ENCODE measurements at regions of chr7 and their contacts with region 1.

Region 1: GRCh38 chr7:7795203-7796135 is 77.1 kb upstream of the RPA3 start:
- DNase-seq: no peak
- H3K4me3 ChIP-seq: no peak overlapping the region
- H3K27ac ChIP-seq: no peak overlapping the region
- H3K4me1 ChIP-seq: no peaks in the 10 kb centered on the region
- H3K27me3 ChIP-seq: no peaks in the 10 kb centered on the region
- CTCF ChIP-seq: no peak
- EP300 ChIP-seq: no peak
- POLR2A ChIP-seq: no peak

Region 2: GRCh38 chr7:7681179-7681935 is 114.1 kb before region 1 on chr7:
- intact Hi-C with region 1: no loop called
- DNase-seq: peak in 1 of 5 donors; percentile 58
- H3K4me3 ChIP-seq: no peak overlapping the region
- H3K27ac ChIP-seq: peak overlapping the region in 1 of 2 donors; percentile 46
- H3K4me1 ChIP-seq: no peaks in the 10 kb centered on the region
- H3K27me3 ChIP-seq: no peaks in the 10 kb centered on the region
- CTCF ChIP-seq: peak; percentile 31 to 52 (median 47)
- EP300 ChIP-seq: no peak
- POLR2A ChIP-seq: no peak

Region 3: DNA sequence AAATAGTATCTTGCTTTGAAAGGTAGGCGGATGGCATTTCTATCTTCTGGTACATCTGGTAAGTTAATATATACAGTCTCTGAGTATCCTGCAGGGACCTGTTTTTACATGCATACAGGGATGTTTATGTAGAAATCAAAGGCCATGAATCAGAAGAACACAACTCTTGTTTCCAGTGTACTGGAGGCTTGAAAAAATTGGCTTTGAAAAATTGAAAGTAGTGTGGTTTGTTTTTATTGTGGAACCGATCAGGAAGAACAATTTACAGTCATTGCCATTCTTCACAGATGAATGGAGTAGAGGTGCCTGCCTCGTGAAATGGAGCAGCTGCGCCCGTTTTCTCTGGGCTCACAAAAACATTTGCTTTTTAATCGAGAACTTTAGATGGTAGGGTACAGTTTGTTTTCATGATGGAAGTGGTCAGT is 23.1 kb before region 1 on chr7:
- intact Hi-C with region 1: no loop called
- DNase-seq: no peak
- H3K4me3 ChIP-seq: no peak overlapping the region
- H3K27ac ChIP-seq: no peak overlapping the region
- H3K4me1 ChIP-seq: peaks cover 3% of the 10 kb centered on the region
- H3K27me3 ChIP-seq: no peaks in the 10 kb centered on the region
- CTCF ChIP-seq: no peak
- EP300 ChIP-seq: no peak
- POLR2A ChIP-seq: no peak

Region 4: DNA sequence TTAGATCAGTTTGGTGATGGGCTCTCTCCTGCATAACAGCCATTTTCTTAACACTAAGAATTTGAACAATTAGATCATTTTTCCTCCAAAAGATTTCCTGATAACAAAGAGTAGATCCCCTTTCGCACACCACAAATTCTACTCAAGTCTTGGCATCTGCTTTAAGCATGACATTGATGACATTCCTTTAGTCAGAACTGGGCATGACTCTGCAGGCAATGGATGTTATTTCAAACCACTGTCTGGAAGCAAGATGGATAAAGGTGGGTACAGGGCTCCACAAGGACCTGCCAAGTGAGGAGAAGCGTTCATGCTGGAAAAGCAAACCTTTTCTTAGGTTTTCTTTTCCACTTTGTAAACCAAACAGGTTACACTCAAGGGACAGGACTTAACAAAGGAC is 296.7 kb after region 1 on chr7:
- intact Hi-C with region 1: loop called in 1 of 4 experiments (anchors 5 kb)
- DNase-seq: no peak
- H3K4me3 ChIP-seq: no peak overlapping the region
- H3K27ac ChIP-seq: no peak overlapping the region
- H3K4me1 ChIP-seq: no peaks in the 10 kb centered on the region
- H3K27me3 ChIP-seq: no peaks in the 10 kb centered on the region
- CTCF ChIP-seq: no peak
- EP300 ChIP-seq: no peak
- POLR2A ChIP-seq: no peak